Endothelial cell of umbilical vein (primary cell): ENCODE measurements at regions of chr3 and their contacts with region 1.

Region 1: DNA sequence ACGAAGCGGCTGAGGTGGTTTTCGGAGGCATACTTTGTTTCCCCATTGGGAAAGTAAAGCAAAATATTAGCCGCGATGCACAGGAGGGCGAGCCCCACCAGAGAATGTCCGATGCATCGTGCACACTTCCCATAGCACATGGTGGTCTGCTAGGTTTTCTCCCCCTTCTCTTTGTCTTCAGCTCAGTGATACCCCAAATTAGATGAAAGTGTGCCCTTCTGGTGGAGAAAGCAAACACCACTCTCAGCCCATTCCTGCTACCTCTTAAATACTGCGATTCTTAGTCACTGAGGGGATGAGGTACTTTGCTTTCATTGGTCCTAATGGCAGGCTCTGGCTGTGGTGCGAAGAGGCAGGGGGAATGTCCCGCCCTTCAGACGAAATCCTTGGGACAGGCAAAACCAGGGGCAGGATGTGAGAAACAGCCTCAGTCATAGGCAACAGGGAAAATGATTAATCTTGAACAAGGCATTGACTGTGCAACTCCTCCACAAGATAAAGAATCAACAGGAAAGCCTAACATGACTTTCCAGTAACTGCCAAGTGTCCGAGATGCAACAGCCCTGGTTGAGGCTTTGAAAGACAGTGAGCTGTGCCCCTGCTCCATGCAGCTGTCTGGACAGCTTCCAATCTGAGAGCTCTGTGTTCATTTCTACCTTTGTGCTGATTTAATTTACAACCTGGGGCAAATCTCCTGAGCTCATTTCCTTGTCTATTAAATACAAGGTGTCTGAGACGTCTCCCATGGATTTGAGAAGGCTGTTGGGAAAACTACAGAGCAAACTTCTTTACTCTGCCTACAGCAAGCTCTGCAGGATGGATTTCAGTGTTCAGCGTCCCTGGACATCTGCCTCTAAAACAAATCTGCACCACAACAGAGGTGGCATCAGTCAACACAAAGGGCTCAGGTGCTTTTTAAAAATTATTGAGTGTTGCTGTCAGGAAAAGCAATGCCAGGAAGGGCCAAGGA is at the start of gene TM4SF1:
- DNase-seq: peak; percentile 100
- H3K4me3 ChIP-seq: peak within 1 kb of the TSS; percentile 81 to 98 (median 93)
- H3K27ac ChIP-seq: peak within 1 kb of the TSS; percentile 90
- H3K4me1 ChIP-seq: peaks cover 45% of the 10 kb centered on the region
- H3K27me3 ChIP-seq: no peaks in the 10 kb centered on the region
- CTCF ChIP-seq: peak in 1 of 2 donors; percentile 4
- POLR2A ChIP-seq: peak; percentile 100
- total RNA-seq, gene TM4SF1: 559 and 619 TPM in 2 replicates

Region 2: DNA sequence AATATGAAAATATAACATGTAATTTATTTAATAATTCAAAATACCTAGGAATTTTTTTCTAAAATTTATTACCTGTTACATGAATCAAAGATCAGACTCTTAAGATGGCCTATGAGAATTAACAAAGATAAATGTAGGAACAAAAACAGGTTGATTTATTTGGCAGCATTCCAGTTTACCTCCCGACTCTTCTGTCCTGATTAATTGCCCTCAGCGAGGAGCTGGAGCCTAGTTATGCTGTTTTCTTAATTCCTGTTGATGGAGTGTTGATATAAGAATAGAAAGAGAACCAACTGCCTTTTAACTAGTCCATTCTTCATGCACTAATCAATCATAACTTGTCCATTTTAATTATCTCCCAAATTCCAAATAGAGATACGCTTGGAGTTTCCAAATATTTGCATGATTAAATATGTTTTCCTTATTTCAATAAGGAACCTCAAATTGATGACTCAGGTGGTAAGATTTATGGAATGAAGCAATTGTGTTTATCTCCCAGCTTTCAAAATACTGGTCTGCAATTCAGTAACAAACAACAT is 560.6 kb before region 1 on chr3:
- CTCF ChIA-PET with region 1: no interaction called
- POLR2A ChIA-PET with region 1: no interaction called
- dilution Hi-C with region 1: no loop called
- intact Hi-C with region 1: no loop called
- DNase-seq: no peak
- H3K4me3 ChIP-seq: no peak overlapping the region
- H3K27ac ChIP-seq: no peak overlapping the region
- H3K4me1 ChIP-seq: no peaks in the 10 kb centered on the region
- H3K27me3 ChIP-seq: no peaks in the 10 kb centered on the region
- CTCF ChIP-seq: no peak
- POLR2A ChIP-seq: no peak

Region 3: GRCh38 chr3:149129326-149130205 is 248.1 kb before region 1 on chr3 and contains the start of gene HPS3:
- CTCF ChIA-PET with region 1: no interaction called
- POLR2A ChIA-PET with region 1: no interaction called
- dilution Hi-C with region 1: no loop called
- intact Hi-C with region 1: loop called (anchors 1 kb)
- DNase-seq: peak; percentile 91
- H3K4me3 ChIP-seq: peak within 1 kb of the TSS; percentile 53 to 85 (median 82)
- H3K27ac ChIP-seq: peak within 1 kb of the TSS; percentile 30
- H3K4me1 ChIP-seq: peaks cover 7% of the 10 kb centered on the region
- H3K27me3 ChIP-seq: peaks cover 0 to 1% of the 10 kb centered on the region in 2 experiments
- CTCF ChIP-seq: no peak
- POLR2A ChIP-seq: peak; percentile 91
- total RNA-seq, gene HPS3: 16.1 and 17.8 TPM in 2 replicates

Region 4: DNA sequence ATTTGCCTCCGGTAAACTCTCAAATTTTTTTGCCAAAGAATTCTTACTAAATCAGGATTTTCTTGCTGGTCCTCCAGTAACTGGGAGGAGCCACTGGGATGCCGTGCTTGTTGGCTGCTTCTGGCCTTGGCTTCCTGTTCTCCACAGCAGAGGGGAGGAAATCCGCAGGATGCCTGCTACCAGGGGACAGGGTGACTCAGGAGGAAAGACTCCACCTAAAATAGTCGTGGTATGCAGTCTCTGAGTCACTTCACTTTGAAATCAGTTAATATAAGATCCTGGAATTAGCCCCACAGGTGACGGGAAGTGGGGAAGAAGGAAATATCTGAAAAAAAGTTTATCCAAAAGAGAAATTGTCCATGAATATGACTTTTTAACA is 37.8 kb before region 1 on chr3:
- CTCF ChIA-PET with region 1: interaction called, 7 read pairs
- POLR2A ChIA-PET with region 1: interaction called, 21 read pairs
- dilution Hi-C with region 1: no loop called
- intact Hi-C with region 1: no loop called
- DNase-seq: peak; percentile 99
- H3K4me3 ChIP-seq: peak overlapping the region in 1 of 3 experiments; percentile 45
- H3K27ac ChIP-seq: peak overlapping the region; percentile 99
- H3K4me1 ChIP-seq: peaks cover 54% of the 10 kb centered on the region
- H3K27me3 ChIP-seq: no peaks in the 10 kb centered on the region
- CTCF ChIP-seq: no peak
- POLR2A ChIP-seq: peak; percentile 88

Region 5: GRCh38 chr3:149393345-149394160 is 15.9 kb after region 1 on chr3:
- CTCF ChIA-PET with region 1: interaction called, 7 read pairs
- POLR2A ChIA-PET with region 1: interaction called, 8 read pairs
- dilution Hi-C with region 1: no loop called
- intact Hi-C with region 1: loop called (anchors 2 kb)
- DNase-seq: peak; percentile 88
- H3K4me3 ChIP-seq: peak overlapping the region in 1 of 3 experiments; percentile 21
- H3K27ac ChIP-seq: peak overlapping the region; percentile 90
- H3K4me1 ChIP-seq: peaks cover 31% of the 10 kb centered on the region
- H3K27me3 ChIP-seq: no peaks in the 10 kb centered on the region
- CTCF ChIP-seq: peak; percentile 84
- POLR2A ChIP-seq: no peak

Region 6: GRCh38 chr3:149480325-149481017 is 102.8 kb after region 1 on chr3:
- CTCF ChIA-PET with region 1: interaction called, 125 read pairs
- POLR2A ChIA-PET with region 1: interaction called, 41 read pairs
- dilution Hi-C with region 1: no loop called
- intact Hi-C with region 1: loop called (anchors 1 kb)
- DNase-seq: peak; percentile 93
- H3K4me3 ChIP-seq: no peak overlapping the region
- H3K27ac ChIP-seq: peak overlapping the region; percentile 64
- H3K4me1 ChIP-seq: peaks cover 12% of the 10 kb centered on the region
- H3K27me3 ChIP-seq: no peaks in the 10 kb centered on the region
- CTCF ChIP-seq: peak; percentile 91 to 93
- POLR2A ChIP-seq: no peak

Region 7: GRCh38 chr3:149487598-149488197 is 110.0 kb after region 1 on chr3:
- CTCF ChIA-PET with region 1: interaction called, 125 read pairs
- POLR2A ChIA-PET with region 1: interaction called, 5 read pairs
- dilution Hi-C with region 1: no loop called
- intact Hi-C with region 1: loop called (anchors 1 kb)
- DNase-seq: no peak
- H3K4me3 ChIP-seq: no peak overlapping the region
- H3K27ac ChIP-seq: no peak overlapping the region
- H3K4me1 ChIP-seq: peaks cover 3% of the 10 kb centered on the region
- H3K27me3 ChIP-seq: no peaks in the 10 kb centered on the region
- CTCF ChIP-seq: peak; percentile 40 to 53
- POLR2A ChIP-seq: no peak

Region 8: GRCh38 chr3:149547938-149548668 is 170.4 kb after region 1 on chr3:
- CTCF ChIA-PET with region 1: no interaction called
- POLR2A ChIA-PET with region 1: no interaction called
- dilution Hi-C with region 1: no loop called
- intact Hi-C with region 1: no loop called
- DNase-seq: no peak
- H3K4me3 ChIP-seq: no peak overlapping the region
- H3K27ac ChIP-seq: peak overlapping the region; percentile 25
- H3K4me1 ChIP-seq: peaks cover 52% of the 10 kb centered on the region
- H3K27me3 ChIP-seq: no peaks in the 10 kb centered on the region
- CTCF ChIP-seq: no peak
- POLR2A ChIP-seq: peak; percentile 41

Region 9: GRCh38 chr3:149621218-149622005 is 243.7 kb after region 1 on chr3:
- CTCF ChIA-PET with region 1: no interaction called
- POLR2A ChIA-PET with region 1: no interaction called
- dilution Hi-C with region 1: no loop called
- intact Hi-C with region 1: loop called (anchors 5 kb)
- DNase-seq: peak; percentile 90
- H3K4me3 ChIP-seq: peak overlapping the region in 1 of 3 experiments; percentile 13
- H3K27ac ChIP-seq: peak overlapping the region; percentile 99
- H3K4me1 ChIP-seq: peaks cover 75% of the 10 kb centered on the region
- H3K27me3 ChIP-seq: no peaks in the 10 kb centered on the region
- CTCF ChIP-seq: no peak
- POLR2A ChIP-seq: peak; percentile 47